CD8-positive, alpha-beta T cell (primary cell): ENCODE measurements at regions of chr17 and their contacts with region 1.

Region 1: DNA sequence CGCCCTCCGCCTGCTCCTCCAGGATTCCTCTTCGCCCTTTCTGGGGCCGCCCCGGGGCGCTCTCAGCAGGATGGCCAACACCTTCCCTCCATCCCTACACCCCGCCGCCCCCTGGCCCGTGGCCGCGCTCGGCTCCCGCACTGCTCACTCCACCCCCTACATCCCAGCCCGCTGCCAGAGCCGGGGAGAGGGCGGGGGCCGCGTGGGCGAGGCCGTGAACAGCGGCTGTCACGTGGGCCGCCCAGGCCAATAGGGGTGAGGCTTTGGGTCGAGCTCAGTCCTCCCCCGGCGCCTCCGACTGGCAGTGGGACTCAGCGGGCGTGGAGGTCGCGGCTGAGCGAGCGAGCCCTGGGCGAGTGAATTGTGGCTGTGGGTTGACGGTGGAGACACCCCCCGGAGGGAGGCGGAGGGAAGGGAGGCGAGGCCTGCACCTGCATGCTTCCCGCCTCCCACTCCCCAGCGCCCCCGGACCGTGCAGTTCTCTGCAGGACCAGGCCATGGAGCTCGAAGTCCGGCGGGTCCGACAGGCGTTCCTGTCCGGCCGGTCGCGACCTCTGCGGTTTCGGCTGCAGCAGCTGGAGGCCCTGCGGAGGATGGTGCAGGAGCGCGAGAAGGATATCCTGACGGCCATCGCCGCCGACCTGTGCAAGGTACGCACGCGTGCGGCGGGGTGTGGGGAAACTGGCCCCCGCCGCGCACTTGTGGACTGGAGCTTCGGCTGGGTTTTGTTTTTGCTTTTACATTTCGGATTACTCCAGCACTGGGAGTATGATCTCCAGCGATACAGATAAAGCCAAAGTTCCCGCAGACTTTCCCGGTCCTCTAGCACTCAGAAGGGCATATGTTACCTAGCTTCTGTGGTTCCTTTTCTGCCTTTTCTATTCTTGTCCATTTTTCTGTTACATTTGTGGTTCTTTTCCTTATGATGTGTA is at the start of gene ALDH3A2:
- DNase-seq: peak; percentile 81 to 95 (median 92)
- ATAC-seq: peak; percentile 91
- H3K4me3 ChIP-seq: peak within 1 kb of the TSS; percentile 82 to 94
- H3K4me3 Mint-ChIP-seq: peak within 1 kb of the TSS; percentile 96
- H3K27ac ChIP-seq: peak within 1 kb of the TSS; percentile 57 to 69
- H3K27ac Mint-ChIP-seq: peak within 1 kb of the TSS; percentile 96
- H3K4me1 ChIP-seq: peaks cover 21% of the 10 kb centered on the region
- H3K4me1 Mint-ChIP-seq: peaks cover 43% of the 10 kb centered on the region
- H3K27me3 ChIP-seq: no peaks in the 10 kb centered on the region
- H3K27me3 Mint-ChIP-seq: no peaks in the 10 kb centered on the region
- CTCF ChIP-seq: no peak
- total RNA-seq, gene ALDH3A2: 14.9 to 16.6 TPM

Region 2: GRCh38 chr17:19377602-19378392 is 270.9 kb before region 1 on chr17:
- CTCF ChIA-PET with region 1: no interaction called
- POLR2A ChIA-PET with region 1: interaction called, 4 read pairs
- intact Hi-C with region 1: loop called (anchors 1 to 5 kb)
- DNase-seq: peak; percentile 82 to 98 (median 93)
- ATAC-seq: peak; percentile 89
- H3K4me3 ChIP-seq: peak overlapping the region; percentile 81 to 96
- H3K4me3 Mint-ChIP-seq: peak overlapping the region; percentile 100
- H3K27ac ChIP-seq: peak overlapping the region; percentile 81 to 86
- H3K27ac Mint-ChIP-seq: peak overlapping the region; percentile 96
- H3K4me1 ChIP-seq: peaks cover 6% of the 10 kb centered on the region
- H3K4me1 Mint-ChIP-seq: peaks cover 15% of the 10 kb centered on the region
- H3K27me3 ChIP-seq: no peaks in the 10 kb centered on the region
- H3K27me3 Mint-ChIP-seq: no peaks in the 10 kb centered on the region
- CTCF ChIP-seq: no peak

Region 3: GRCh38 chr17:19507775-19508576 is 140.8 kb before region 1 on chr17:
- CTCF ChIA-PET with region 1: no interaction called
- POLR2A ChIA-PET with region 1: no interaction called
- intact Hi-C with region 1: loop called (anchors 2 kb)
- DNase-seq: peak; percentile 79 to 95 (median 87)
- ATAC-seq: peak; percentile 73
- H3K4me3 ChIP-seq: peak overlapping the region; percentile 73 to 78
- H3K4me3 Mint-ChIP-seq: peak overlapping the region; percentile 87
- H3K27ac ChIP-seq: peak overlapping the region; percentile 19 to 62
- H3K27ac Mint-ChIP-seq: peak overlapping the region; percentile 98
- H3K4me1 ChIP-seq: peaks cover 7% of the 10 kb centered on the region
- H3K4me1 Mint-ChIP-seq: peaks cover 7% of the 10 kb centered on the region
- H3K27me3 ChIP-seq: no peaks in the 10 kb centered on the region
- H3K27me3 Mint-ChIP-seq: no peaks in the 10 kb centered on the region
- CTCF ChIP-seq: no peak

Region 4: DNA sequence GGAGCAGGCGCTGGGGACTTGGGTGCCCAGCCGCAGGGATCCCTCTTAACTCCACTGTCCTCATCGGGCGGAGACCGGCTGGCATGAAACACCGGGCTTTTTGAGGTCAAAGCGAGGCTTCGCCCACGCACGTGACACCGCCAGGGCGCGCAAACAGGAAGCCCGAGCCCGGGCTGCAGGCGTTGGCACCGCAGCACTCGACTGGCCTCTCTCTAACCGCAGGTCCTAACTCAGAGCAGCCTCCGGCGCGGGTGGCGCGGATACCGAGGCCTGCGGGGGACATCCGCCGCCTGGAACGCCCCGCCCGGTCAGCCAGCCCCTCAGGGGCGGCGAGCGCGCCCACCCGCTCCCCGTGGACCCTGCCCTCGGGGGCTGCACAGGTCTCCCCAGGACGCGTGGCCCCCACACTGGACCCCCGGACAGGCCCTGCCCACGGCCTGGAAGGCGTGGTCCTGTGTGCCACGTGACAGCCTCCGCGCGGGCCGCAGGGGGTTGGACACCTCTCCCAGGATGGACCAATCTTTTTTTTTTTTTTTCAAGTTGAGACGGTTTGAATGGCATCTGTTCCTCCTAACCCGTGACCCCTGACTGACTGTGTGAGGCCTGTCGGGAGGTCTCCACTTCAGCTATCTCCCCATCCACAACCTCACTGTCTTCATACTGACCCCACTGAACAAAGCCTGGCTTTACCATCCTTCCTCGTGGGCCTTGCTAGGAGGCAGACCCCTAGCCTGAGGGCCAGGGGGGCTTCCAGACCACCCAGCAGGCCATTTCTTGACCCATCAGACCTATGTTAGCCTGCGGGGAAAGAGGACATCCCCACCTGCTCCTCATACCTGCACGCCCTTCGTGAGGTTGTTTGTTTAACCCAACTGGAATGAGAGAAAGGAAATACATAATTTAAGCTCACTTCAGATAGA is 76.0 kb after region 1 on chr17:
- CTCF ChIA-PET with region 1: no interaction called
- POLR2A ChIA-PET with region 1: no interaction called
- intact Hi-C with region 1: loop called in 1 of 2 experiments (anchors 5 kb)
- DNase-seq: peak in 8 of 9 experiments; percentile 18 to 77 (median 42)
- ATAC-seq: no peak
- H3K4me3 ChIP-seq: peak overlapping the region; percentile 25 to 38
- H3K4me3 Mint-ChIP-seq: peak overlapping the region; percentile 73
- H3K27ac ChIP-seq: no peak overlapping the region
- H3K27ac Mint-ChIP-seq: peak overlapping the region; percentile 64
- H3K4me1 ChIP-seq: peaks cover 17% of the 10 kb centered on the region
- H3K4me1 Mint-ChIP-seq: peaks cover 25% of the 10 kb centered on the region
- H3K27me3 ChIP-seq: no peaks in the 10 kb centered on the region
- H3K27me3 Mint-ChIP-seq: no peaks in the 10 kb centered on the region
- CTCF ChIP-seq: no peak

Region 5: DNA sequence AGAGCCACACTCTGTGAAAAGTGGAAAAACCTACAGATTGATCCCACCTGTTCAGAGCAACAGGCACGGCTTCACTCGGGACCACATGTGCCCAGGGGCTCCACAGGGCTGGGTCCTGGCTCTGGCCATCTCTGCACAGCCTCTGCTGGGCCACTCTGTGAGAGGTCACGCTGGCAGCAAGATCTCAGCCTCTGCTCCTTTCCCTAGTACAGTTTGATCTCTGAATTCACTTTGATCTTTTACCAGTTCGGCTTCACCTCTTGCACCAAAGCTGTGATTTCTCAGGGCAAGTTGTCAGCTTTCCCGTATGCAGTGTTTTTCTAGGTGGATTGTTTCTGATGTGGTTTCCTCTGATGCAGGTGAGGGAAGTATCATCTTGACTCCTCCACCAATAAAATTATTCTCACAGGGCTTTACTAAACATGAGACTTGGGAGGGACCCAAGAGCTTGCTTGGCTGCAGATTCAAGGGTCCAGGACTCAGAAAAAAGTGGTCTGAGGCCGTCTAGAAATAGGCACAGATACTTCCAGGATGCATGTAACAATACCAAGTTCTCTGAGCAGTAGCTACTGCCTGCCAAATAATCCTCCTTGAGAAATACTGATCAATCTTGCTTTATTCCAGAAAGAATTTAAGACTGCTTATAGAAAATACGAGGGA is 123.4 kb after region 1 on chr17:
- CTCF ChIA-PET with region 1: interaction called, 12 read pairs
- POLR2A ChIA-PET with region 1: interaction called, 5 read pairs
- intact Hi-C with region 1: loop called (anchors 1 to 5 kb)
- DNase-seq: peak in 7 of 9 experiments; percentile 6 to 87 (median 51)
- ATAC-seq: peak; percentile 90
- H3K4me3 ChIP-seq: peak overlapping the region in 1 of 2 experiments; percentile 27
- H3K4me3 Mint-ChIP-seq: peak overlapping the region; percentile 49
- H3K27ac ChIP-seq: peak overlapping the region in 1 of 2 experiments; percentile 30
- H3K27ac Mint-ChIP-seq: peak overlapping the region; percentile 89
- H3K4me1 ChIP-seq: peaks cover 37% of the 10 kb centered on the region
- H3K4me1 Mint-ChIP-seq: peaks cover 43% of the 10 kb centered on the region
- H3K27me3 ChIP-seq: no peaks in the 10 kb centered on the region
- H3K27me3 Mint-ChIP-seq: no peaks in the 10 kb centered on the region
- CTCF ChIP-seq: no peak

Region 6: DNA sequence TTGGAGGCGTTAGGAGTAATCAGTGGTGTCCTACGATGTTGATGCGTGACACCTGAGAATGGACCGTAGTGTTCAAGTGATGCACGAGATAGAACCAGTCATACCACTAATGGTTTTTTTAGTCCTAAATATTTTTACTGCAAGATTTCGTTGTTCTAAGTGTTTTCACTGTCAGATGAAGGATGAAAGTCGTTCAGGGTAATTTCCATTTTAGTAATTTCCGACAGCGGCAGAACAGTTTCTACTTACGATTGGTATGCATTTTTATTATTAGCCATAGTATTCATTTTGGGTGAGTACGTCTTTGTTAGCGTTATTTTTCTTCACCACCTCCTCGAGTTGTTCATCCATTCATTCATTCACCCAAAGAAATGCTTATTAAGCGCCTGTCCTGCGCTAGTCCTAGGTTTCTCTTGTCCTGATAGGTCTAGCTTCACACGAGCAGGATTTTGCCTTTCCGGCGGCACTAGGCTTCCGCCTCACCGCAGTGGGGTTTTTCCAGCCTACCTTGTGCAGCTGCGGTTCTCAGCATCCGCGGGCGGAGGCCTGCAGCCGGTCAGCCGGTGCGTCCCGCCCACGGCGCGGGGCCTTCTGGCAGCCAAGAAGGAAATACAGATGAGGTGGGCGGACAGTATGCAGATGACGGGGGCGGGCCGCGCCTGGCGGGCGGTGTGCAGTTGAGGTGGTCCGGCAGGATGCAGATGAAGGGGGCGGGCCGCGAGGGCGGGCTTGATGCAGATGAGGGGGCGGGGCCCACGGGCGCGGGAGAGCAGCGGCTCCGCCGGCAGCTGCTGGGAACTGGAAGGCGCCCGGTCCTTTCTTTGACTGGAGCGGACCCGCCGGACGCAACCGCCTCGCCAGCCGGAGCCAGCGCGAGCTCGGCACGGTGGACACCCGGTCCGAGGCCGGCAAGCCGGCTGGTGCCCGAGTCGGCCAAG is 506.8 kb after region 1 on chr17:
- CTCF ChIA-PET with region 1: no interaction called
- POLR2A ChIA-PET with region 1: no interaction called
- intact Hi-C with region 1: loop called in 1 of 2 experiments (anchors 1 kb)
- DNase-seq: peak; percentile 87 to 98 (median 95)
- ATAC-seq: peak; percentile 98
- H3K4me3 ChIP-seq: peak overlapping the region; percentile 48 to 70
- H3K4me3 Mint-ChIP-seq: no peak overlapping the region
- H3K27ac ChIP-seq: peak overlapping the region; percentile 21 to 47
- H3K27ac Mint-ChIP-seq: no peak overlapping the region
- H3K4me1 ChIP-seq: peaks cover 16% of the 10 kb centered on the region
- H3K4me1 Mint-ChIP-seq: peaks cover 3% of the 10 kb centered on the region
- H3K27me3 ChIP-seq: no peaks in the 10 kb centered on the region
- H3K27me3 Mint-ChIP-seq: no peaks in the 10 kb centered on the region
- CTCF ChIP-seq: no peak